ENCODE measurements at regions of chr3 and their contacts with region 1.

Region 1: GRCh38 chr3:186930641-186931531 is 560 bp downstream of the ST6GAL1 start:
- DNase-seq: peak; percentile 89 to 95 (median 93)
- H3K4me3 ChIP-seq: peak overlapping the region; percentile 72 to 98 (median 89)
- H3K27ac ChIP-seq: peak overlapping the region; percentile 76 to 87
- H3K4me1 ChIP-seq: peaks cover 15 to 41% (median 37%) of the 10 kb centered on the region in 4 experiments
- H3K27me3 ChIP-seq: no peaks in the 10 kb centered on the region

Region 2: DNA sequence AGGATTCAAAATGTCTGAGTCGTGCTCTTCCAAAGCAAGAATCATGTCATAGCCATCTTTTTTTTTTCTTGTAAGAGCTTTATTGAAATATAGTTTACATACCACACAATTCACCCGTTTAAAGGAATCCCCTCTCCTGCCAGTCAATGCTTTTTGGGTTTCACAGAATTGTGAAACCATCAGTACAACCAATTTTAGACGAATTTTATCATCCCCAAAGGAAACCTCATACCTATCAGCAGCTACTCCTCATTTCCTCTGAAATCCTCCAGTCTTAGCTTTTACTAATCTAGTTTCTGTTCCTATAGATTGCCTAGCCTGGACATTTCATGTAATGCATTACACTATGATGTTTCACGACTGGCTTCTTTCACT is 48.7 kb before region 1 on chr3:
- CTCF ChIA-PET with region 1: interaction called, 10 read pairs
- POLR2A ChIA-PET with region 1: no interaction called
- DNase-seq: peak; percentile 19 to 61 (median 58)
- H3K4me3 ChIP-seq: peak overlapping the region in 1 of 7 experiments; percentile 31
- H3K27ac ChIP-seq: no peak overlapping the region
- H3K4me1 ChIP-seq: peaks cover 0 to 30% (median 8%) of the 10 kb centered on the region in 4 experiments
- H3K27me3 ChIP-seq: no peaks in the 10 kb centered on the region

Region 3: GRCh38 chr3:186965141-186965879 is 34.4 kb after region 1 on chr3:
- CTCF ChIA-PET with region 1: interaction called, 17 read pairs
- POLR2A ChIA-PET with region 1: no interaction called
- DNase-seq: no peak
- H3K4me3 ChIP-seq: no peak overlapping the region
- H3K27ac ChIP-seq: no peak overlapping the region
- H3K4me1 ChIP-seq: peaks cover 0 to 20% (median 14%) of the 10 kb centered on the region in 4 experiments
- H3K27me3 ChIP-seq: no peaks in the 10 kb centered on the region

Region 4: GRCh38 chr3:187456250-187456649 is 525.4 kb after region 1 on chr3:
- CTCF ChIA-PET with region 1: no interaction called
- POLR2A ChIA-PET with region 1: no interaction called
- DNase-seq: no peak
- H3K4me3 ChIP-seq: no peak overlapping the region
- H3K27ac ChIP-seq: no peak overlapping the region
- H3K4me1 ChIP-seq: no peaks in the 10 kb centered on the region
- H3K27me3 ChIP-seq: no peaks in the 10 kb centered on the region